Mammary epithelial cell (primary cell): ENCODE measurements at regions of chr11 and their contacts with region 1.

Region 1: GRCh38 chr11:101706541-101706940 is 122.7 kb upstream of the TRPC6 start:
- DNase-seq: peak; percentile 57
- H3K4me3 ChIP-seq: no peak overlapping the region
- H3K27ac ChIP-seq: no peak overlapping the region
- H3K4me1 ChIP-seq: no peaks in the 10 kb centered on the region
- H3K27me3 ChIP-seq: no peaks in the 10 kb centered on the region
- CTCF ChIP-seq: no peak

Region 2: DNA sequence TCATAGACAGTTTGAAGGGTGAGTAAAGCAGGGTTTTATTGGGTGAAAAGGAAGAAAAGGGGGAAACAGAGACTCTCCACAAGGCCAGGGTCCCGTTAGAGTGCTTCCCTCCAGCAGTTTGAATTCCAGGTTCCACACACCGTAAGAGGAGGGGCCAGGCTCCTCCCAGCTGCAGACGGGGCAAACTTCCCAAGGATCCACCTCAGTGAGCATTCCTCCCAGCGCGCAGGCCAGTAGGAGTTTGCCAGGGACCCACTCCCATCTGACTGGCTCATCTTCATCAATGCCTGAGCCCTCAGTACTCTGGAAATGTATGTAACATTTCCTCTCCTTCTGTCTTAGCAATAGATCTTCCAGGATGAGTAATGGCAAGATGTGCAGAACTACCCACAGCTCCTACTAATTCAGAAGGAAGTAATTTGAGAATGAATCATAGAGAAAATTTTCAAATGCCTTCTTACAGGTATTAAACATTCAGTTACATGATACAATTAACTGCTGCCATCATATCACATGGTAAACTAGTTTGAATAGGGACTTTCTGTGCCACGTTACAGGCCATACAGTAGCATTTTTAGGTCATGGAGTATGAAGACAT is 88.7 kb before region 1 on chr11:
- CTCF ChIA-PET with region 1: no interaction called
- dilution Hi-C with region 1: no loop called
- in situ Hi-C with region 1: no loop called
- intact Hi-C with region 1: loop called (anchors 5 kb)
- DNase-seq: peak; percentile 85
- H3K4me3 ChIP-seq: no peak overlapping the region
- H3K27ac ChIP-seq: peak overlapping the region; percentile 92
- H3K4me1 ChIP-seq: peaks cover 22% of the 10 kb centered on the region
- H3K27me3 ChIP-seq: no peaks in the 10 kb centered on the region
- CTCF ChIP-seq: no peak